Activated CD8-positive, alpha-beta memory T cell treated with anti-CD3 and anti-CD28 coated beads, Interleukin-2, amount 10 ng/mL, durations not matched to agents 7 days and 5 days (primary cell): ENCODE measurements at regions of chr1 and their contacts with region 1.

Region 1: DNA sequence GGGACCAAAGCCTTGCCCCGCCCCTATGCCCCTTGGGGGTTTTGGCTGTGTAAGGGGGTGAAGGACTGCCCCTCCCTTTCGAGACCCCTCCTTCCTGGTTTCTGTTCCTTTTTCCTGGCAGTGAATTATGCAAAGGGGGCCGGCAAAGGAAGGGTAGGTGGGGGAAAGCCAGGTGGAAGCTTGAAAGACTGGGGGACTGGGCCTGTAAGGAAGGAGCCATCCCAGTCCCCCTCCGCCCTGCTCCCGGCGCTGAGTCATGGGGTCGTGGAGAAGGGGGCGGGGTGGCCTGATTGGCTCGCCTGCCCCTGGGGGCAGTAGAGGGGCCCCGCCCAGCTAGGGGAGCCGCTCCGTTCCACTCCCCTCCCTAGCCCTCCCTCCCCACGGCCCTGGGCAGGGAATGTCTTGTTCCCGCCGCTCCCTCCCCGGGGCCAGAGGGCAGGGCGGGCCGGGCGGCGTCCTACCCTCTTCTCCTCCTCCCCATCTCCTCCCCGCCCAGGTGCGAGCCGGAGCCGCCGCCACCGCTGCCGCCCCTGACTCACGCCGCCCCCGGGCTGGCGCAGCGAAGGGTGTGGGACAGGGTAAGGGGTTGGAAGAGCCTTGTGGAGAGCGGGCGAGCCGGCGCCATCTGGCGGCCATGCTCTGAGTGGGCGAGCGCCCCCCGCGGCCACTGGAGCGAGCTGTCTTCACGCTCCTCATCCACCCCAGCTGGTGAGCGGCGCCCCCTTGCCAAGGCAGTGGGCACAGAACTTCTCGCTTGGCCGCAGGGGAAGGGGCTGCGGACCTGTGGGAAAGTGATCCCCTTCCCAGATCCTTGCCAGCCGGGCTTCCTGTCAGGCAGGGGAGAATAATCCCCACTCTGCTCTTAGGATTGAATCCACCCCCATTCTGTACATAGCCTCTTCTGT is 14.7 kb downstream of the ZBTB7B start:
- DNase-seq: peak; percentile 89
- ATAC-seq: peak; percentile 99
- H3K4me3 Mint-ChIP-seq: peak overlapping the region; percentile 47
- H3K27ac Mint-ChIP-seq: peak overlapping the region; percentile 44
- H3K4me1 Mint-ChIP-seq: peaks cover 42% of the 10 kb centered on the region
- H3K27me3 Mint-ChIP-seq: no peaks in the 10 kb centered on the region

Region 2: DNA sequence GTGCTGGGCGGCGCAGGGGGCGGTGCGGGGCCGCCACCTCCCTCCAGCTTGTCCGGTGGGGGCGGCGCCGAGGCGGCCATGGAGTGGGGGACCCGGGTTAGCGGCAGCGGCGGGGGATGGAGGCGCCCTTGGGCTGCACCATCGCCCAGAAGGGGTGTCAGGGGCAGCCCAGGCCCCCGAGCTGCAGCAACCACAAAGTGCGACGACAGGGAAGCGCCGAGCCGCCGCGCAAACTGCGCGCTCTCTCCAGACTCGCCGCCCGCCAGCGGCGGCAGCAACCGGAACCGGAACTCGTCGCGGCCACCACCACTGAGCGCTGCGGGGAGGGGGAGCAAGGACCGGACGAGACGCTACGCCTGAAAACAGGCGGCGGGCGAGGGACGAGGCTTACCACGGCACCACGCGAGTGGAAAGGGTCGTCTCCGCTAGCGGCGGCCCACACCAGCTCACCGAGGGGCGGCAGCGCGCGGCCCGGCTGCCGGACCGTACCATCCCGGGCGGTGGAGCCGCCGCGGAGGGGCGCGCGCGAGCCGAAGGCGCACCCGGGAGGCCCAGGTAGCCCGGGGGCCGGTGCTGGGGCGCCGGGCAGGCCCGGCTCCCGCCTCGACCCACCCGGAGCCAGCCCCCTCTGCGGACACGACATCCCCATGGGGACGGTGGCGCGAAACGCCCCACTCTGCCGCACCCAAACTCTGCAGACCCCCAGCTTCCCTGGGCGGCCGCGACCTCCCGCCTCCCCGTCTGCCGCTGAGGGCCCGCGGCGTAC is 55.6 kb before region 1 on chr1 and contains the start of gene PYGO2:
- CTCF ChIA-PET with region 1: interaction called, 41 read pairs
- DNase-seq: peak; percentile 87
- ATAC-seq: peak; percentile 86
- H3K4me3 Mint-ChIP-seq: peak within 1 kb of the TSS; percentile 96
- H3K27ac Mint-ChIP-seq: peak within 1 kb of the TSS; percentile 91
- H3K4me1 Mint-ChIP-seq: peaks cover 44% of the 10 kb centered on the region
- H3K27me3 Mint-ChIP-seq: no peaks in the 10 kb centered on the region
- total RNA-seq, gene PYGO2: 44.0 to 47.9 TPM

Region 3: DNA sequence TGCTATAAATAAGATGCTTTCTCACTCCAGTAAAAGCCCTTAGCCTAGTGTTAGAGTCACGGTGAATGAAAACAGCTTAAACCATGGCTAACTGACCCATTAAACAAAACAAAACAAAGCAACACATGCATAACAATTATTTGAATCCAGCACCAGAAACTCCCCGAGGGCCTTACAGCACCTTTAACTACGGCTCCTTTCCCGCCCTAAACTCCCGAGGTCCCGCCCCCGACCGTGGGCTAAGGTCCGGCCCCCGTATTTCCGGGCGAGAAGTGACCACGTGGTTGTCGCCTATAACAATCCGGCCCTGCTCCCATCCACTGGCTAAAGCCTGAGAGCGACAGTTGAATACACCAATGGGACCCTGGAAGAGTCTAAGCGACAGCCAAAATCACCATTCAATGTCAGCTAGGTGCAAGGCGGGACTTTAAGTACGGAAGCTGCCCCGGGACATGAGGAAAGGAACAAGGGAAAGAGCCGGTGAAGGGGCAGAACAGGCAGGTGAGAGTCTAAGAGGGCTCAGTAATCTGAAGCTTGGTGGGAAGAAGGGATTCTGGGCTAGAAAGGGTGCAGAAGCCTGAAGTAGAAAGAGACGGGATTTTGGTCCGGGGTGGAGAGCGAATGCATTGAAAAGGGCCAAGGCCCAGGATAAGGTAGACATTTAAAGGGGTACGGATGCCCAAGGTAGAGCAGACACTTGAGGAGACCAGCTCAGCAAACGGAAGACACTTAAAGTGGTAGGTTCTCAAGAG is 34.2 kb before region 1 on chr1 and contains the start of gene FLAD1:
- CTCF ChIA-PET with region 1: interaction called, 47 read pairs
- DNase-seq: peak; percentile 99
- ATAC-seq: peak; percentile 100
- H3K4me3 Mint-ChIP-seq: no peak within 1 kb of the TSS
- H3K27ac Mint-ChIP-seq: no peak within 1 kb of the TSS
- H3K4me1 Mint-ChIP-seq: peaks cover 25% of the 10 kb centered on the region
- H3K27me3 Mint-ChIP-seq: no peaks in the 10 kb centered on the region
- total RNA-seq, gene FLAD1: 48.2 to 63.7 TPM

Region 4: DNA sequence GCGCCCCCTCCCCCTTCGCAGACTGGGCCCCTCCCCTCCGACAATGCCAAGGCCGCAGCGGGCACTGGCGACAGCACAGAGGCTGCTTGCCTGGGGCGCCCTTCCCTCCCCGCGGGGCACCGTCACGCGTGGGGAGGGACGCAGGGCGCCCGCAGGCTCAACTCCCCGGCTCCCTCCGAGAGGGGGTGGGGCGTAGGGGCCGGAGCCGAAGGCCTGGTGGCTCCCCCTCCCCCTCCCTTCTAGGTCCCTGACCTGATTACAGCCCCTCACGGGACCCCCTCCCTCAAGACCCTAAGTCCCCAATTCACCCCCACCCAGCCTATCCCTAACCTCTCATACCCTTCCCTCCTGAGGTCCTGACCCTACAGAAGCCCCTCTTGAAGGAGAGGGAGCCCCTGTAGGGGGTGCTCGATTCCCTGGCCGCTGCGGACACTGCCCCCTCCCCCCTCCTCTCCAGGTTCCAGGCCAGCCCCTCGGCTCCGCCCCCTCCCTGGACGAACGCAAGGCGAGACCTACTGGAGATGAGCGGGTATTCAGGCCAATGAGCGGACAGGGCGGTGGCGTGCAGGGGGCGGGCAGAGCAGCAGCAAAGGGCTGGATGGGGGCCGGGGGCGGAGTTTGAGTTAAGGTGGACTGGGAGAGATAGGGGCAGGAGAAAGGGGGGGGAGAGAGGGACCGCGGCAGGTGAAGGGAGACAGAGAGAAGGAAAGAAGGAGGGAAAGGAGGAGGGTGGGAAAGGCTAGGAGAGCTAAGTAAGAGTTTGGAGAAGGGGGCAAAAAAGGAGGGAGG is 15.4 kb before region 1 on chr1:
- CTCF ChIA-PET with region 1: interaction called, 212 read pairs
- DNase-seq: peak; percentile 100
- ATAC-seq: peak; percentile 77
- H3K4me3 Mint-ChIP-seq: peak overlapping the region; percentile 98
- H3K27ac Mint-ChIP-seq: peak overlapping the region; percentile 97
- H3K4me1 Mint-ChIP-seq: peaks cover 57% of the 10 kb centered on the region
- H3K27me3 Mint-ChIP-seq: no peaks in the 10 kb centered on the region

Region 5: GRCh38 chr1:155038602-155039307 is 21.5 kb after region 1 on chr1:
- CTCF ChIA-PET with region 1: interaction called, 328 read pairs
- DNase-seq: no peak
- ATAC-seq: no peak
- H3K4me3 Mint-ChIP-seq: no peak overlapping the region
- H3K27ac Mint-ChIP-seq: no peak overlapping the region
- H3K4me1 Mint-ChIP-seq: peaks cover 4% of the 10 kb centered on the region
- H3K27me3 Mint-ChIP-seq: peaks cover 33% of the 10 kb centered on the region